ENCODE measurements at regions of chr17 and their contacts with region 1.

Region 1: GRCh38 chr17:83083323-83084201 is 4.2 kb downstream of the METRNL start:
- DNase-seq: peak; percentile 82 to 85
- ATAC-seq: peak; percentile 42 to 63 (median 56)
- H3K4me3 ChIP-seq: no peak overlapping the region
- H3K4me3 Mint-ChIP-seq: peak overlapping the region; percentile 90
- H3K27ac ChIP-seq: peak overlapping the region; percentile 93
- H3K27ac Mint-ChIP-seq: peak overlapping the region; percentile 98
- H3K4me1 ChIP-seq: peaks cover 78% of the 10 kb centered on the region
- H3K4me1 Mint-ChIP-seq: peaks cover 57 to 63% of the 10 kb centered on the region in 2 donors
- H3K27me3 ChIP-seq: peaks cover under 1% of the 10 kb centered on the region
- H3K27me3 Mint-ChIP-seq: no peaks in the 10 kb centered on the region
- CTCF ChIP-seq: no peak

Region 2: GRCh38 chr17:82848022-82848592 is 235.5 kb before region 1 on chr17:
- intact Hi-C with region 1: loop called (anchors 5 kb)
- DNase-seq: peak; percentile 74 to 75
- ATAC-seq: peak; percentile 94 to 98 (median 95)
- H3K4me3 ChIP-seq: peak overlapping the region; percentile 31
- H3K4me3 Mint-ChIP-seq: peak overlapping the region; percentile 83
- H3K27ac ChIP-seq: peak overlapping the region; percentile 75
- H3K27ac Mint-ChIP-seq: peak overlapping the region; percentile 88 to 92
- H3K4me1 ChIP-seq: peaks cover 24% of the 10 kb centered on the region
- H3K4me1 Mint-ChIP-seq: peaks cover 19 to 32% of the 10 kb centered on the region in 2 donors
- H3K27me3 ChIP-seq: no peaks in the 10 kb centered on the region
- H3K27me3 Mint-ChIP-seq: no peaks in the 10 kb centered on the region
- CTCF ChIP-seq: no peak

Region 3: GRCh38 chr17:82892899-82893565 is 190.5 kb before region 1 on chr17:
- intact Hi-C with region 1: loop called (anchors 1 kb)
- DNase-seq: peak; percentile 76 to 91
- ATAC-seq: peak; percentile 92 to 99 (median 93)
- H3K4me3 ChIP-seq: no peak overlapping the region
- H3K4me3 Mint-ChIP-seq: peak overlapping the region; percentile 68
- H3K27ac ChIP-seq: peak overlapping the region; percentile 61
- H3K27ac Mint-ChIP-seq: peak overlapping the region; percentile 82 to 83
- H3K4me1 ChIP-seq: peaks cover 29% of the 10 kb centered on the region
- H3K4me1 Mint-ChIP-seq: peaks cover 31 to 36% of the 10 kb centered on the region in 2 donors
- H3K27me3 ChIP-seq: no peaks in the 10 kb centered on the region
- H3K27me3 Mint-ChIP-seq: peaks cover 0 to 7% of the 10 kb centered on the region in 2 donors
- CTCF ChIP-seq: no peak

Region 4: GRCh38 chr17:82985973-82986372 is 97.6 kb before region 1 on chr17:
- intact Hi-C with region 1: loop called (anchors 1 kb)
- DNase-seq: peak; percentile 62 to 80
- ATAC-seq: peak; percentile 88 to 97 (median 94)
- H3K4me3 ChIP-seq: no peak overlapping the region
- H3K4me3 Mint-ChIP-seq: peak overlapping the region; percentile 86
- H3K27ac ChIP-seq: peak overlapping the region; percentile 2
- H3K27ac Mint-ChIP-seq: peak overlapping the region; percentile 78 to 86
- H3K4me1 ChIP-seq: peaks cover 24% of the 10 kb centered on the region
- H3K4me1 Mint-ChIP-seq: peaks cover 20 to 44% of the 10 kb centered on the region in 2 donors
- H3K27me3 ChIP-seq: no peaks in the 10 kb centered on the region
- H3K27me3 Mint-ChIP-seq: no peaks in the 10 kb centered on the region
- CTCF ChIP-seq: no peak

Region 5: GRCh38 chr17:83024218-83024971 is 59.2 kb before region 1 on chr17:
- intact Hi-C with region 1: no loop called
- DNase-seq: peak in 1 of 2 donors; percentile 15
- ATAC-seq: peak in 2 of 3 donors; percentile 32 to 49
- H3K4me3 ChIP-seq: no peak overlapping the region
- H3K4me3 Mint-ChIP-seq: no peak overlapping the region
- H3K27ac ChIP-seq: no peak overlapping the region
- H3K27ac Mint-ChIP-seq: no peak overlapping the region
- H3K4me1 ChIP-seq: peaks cover 35% of the 10 kb centered on the region
- H3K4me1 Mint-ChIP-seq: peaks cover 16 to 28% of the 10 kb centered on the region in 2 donors
- H3K27me3 ChIP-seq: no peaks in the 10 kb centered on the region
- H3K27me3 Mint-ChIP-seq: no peaks in the 10 kb centered on the region
- CTCF ChIP-seq: no peak

Region 6: GRCh38 chr17:83037084-83037873 is 46.3 kb before region 1 on chr17:
- intact Hi-C with region 1: no loop called
- DNase-seq: no peak
- ATAC-seq: no peak
- H3K4me3 ChIP-seq: no peak overlapping the region
- H3K4me3 Mint-ChIP-seq: no peak overlapping the region
- H3K27ac ChIP-seq: no peak overlapping the region
- H3K27ac Mint-ChIP-seq: no peak overlapping the region
- H3K4me1 ChIP-seq: no peaks in the 10 kb centered on the region
- H3K4me1 Mint-ChIP-seq: no peaks in the 10 kb centered on the region
- H3K27me3 ChIP-seq: no peaks in the 10 kb centered on the region
- H3K27me3 Mint-ChIP-seq: no peaks in the 10 kb centered on the region
- CTCF ChIP-seq: no peak

Region 7: GRCh38 chr17:83051395-83052233 is 31.9 kb before region 1 on chr17:
- intact Hi-C with region 1: loop called (anchors 1 kb)
- DNase-seq: peak; percentile 97 to 99
- ATAC-seq: peak; percentile 79 to 96 (median 80)
- H3K4me3 ChIP-seq: peak overlapping the region; percentile 35
- H3K4me3 Mint-ChIP-seq: peak overlapping the region; percentile 93
- H3K27ac ChIP-seq: peak overlapping the region; percentile 97
- H3K27ac Mint-ChIP-seq: peak overlapping the region; percentile 88 to 92
- H3K4me1 ChIP-seq: peaks cover 57% of the 10 kb centered on the region
- H3K4me1 Mint-ChIP-seq: peaks cover 31 to 50% of the 10 kb centered on the region in 2 donors
- H3K27me3 ChIP-seq: no peaks in the 10 kb centered on the region
- H3K27me3 Mint-ChIP-seq: no peaks in the 10 kb centered on the region
- CTCF ChIP-seq: no peak

Region 8: GRCh38 chr17:83099570-83100231 is 16.1 kb after region 1 on chr17:
- intact Hi-C with region 1: loop called (anchors 2 kb)
- DNase-seq: peak in 1 of 2 donors; percentile 41
- ATAC-seq: peak; percentile 15 to 28 (median 20)
- H3K4me3 ChIP-seq: no peak overlapping the region
- H3K4me3 Mint-ChIP-seq: peak overlapping the region; percentile 75
- H3K27ac ChIP-seq: no peak overlapping the region
- H3K27ac Mint-ChIP-seq: peak overlapping the region; percentile 72 to 78
- H3K4me1 ChIP-seq: peaks cover 48% of the 10 kb centered on the region
- H3K4me1 Mint-ChIP-seq: peaks cover 13 to 47% of the 10 kb centered on the region in 2 donors
- H3K27me3 ChIP-seq: peaks cover 17% of the 10 kb centered on the region
- H3K27me3 Mint-ChIP-seq: no peaks in the 10 kb centered on the region
- CTCF ChIP-seq: no peak

Region 9: DNA sequence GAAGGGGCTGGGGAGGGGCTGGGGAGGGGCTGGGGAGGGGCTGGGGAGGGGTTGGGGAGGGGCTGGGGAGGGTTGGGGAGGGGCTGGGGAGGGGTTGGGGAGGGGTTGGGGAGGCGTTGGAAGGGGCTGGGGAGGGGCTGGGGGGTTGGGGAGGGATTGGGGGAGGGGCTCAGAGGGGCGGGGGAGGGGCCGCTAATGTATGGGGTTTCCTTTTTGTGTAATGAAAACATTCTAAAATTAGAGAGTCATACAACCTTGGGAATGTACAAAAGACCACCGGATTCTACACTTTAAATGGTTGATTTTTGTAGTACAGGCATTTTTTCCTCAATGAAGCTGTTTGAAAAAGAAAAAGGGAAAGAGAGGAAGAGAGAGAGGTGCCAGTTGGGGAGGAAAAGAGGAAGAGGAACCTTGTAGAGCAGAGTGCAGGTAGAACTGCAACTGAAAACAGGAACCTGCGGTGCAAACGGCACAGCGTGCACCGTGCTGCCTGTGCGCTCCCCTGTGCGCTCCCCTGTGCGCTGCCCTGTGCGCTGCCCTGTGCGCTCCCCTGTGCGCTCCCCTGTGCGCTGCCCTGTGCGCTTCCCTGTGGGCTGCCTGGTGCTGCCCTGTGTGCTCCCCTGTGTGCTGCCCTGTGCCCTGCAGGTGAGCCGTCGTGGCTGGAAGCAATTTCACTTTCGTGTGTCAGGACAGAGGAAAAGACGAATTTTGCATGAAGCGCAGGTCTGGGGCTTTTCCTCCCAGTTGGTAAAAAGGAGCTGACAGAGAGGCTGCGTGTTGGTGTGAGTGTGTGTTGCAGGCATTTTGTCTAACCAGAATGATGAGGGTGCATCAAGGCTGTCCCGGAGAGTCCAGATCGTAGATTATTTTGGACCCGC is 36.7 kb after region 1 on chr17:
- intact Hi-C with region 1: no loop called
- DNase-seq: peak in 1 of 2 donors; percentile 54
- ATAC-seq: peak; percentile 57 to 83 (median 59)
- H3K4me3 ChIP-seq: no peak overlapping the region
- H3K4me3 Mint-ChIP-seq: peak overlapping the region; percentile 70
- H3K27ac ChIP-seq: no peak overlapping the region
- H3K27ac Mint-ChIP-seq: peak overlapping the region; percentile 36 to 54
- H3K4me1 ChIP-seq: peaks cover 32% of the 10 kb centered on the region
- H3K4me1 Mint-ChIP-seq: peaks cover 44 to 56% of the 10 kb centered on the region in 2 donors
- H3K27me3 ChIP-seq: peaks cover 18% of the 10 kb centered on the region
- H3K27me3 Mint-ChIP-seq: peaks cover 41 to 47% of the 10 kb centered on the region in 2 donors
- CTCF ChIP-seq: no peak

Region 10: DNA sequence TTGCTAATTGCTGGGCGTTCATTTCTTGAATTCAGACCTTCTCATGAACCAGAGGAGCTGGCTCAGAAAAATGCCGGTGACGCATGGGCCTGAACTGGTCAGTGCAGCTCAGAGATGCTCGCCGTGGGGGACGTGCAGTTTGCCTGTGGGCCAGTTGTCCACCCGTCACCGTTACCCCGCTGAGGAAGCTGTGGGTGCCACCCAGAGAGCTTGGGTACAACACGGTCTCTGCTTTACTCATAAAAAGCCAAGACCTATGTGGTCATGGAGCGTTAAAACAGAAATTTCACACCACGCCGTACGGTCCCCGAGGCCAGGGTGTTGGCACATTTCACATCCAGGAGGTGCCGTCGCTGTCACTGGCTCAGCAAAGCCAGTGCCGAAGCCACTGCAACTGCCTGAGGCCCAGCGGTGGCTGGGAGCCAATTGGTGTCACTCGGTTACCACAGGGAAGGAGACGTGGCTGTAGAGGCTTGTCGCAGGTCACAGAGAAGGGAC is 116.7 kb after region 1 on chr17:
- intact Hi-C with region 1: loop called (anchors 1 kb)
- DNase-seq: peak; percentile 84 to 86
- ATAC-seq: peak; percentile 73 to 87 (median 84)
- H3K4me3 ChIP-seq: peak overlapping the region; percentile 19
- H3K4me3 Mint-ChIP-seq: peak overlapping the region; percentile 94
- H3K27ac ChIP-seq: peak overlapping the region; percentile 85
- H3K27ac Mint-ChIP-seq: peak overlapping the region; percentile 98 to 99
- H3K4me1 ChIP-seq: peaks cover 72% of the 10 kb centered on the region
- H3K4me1 Mint-ChIP-seq: peaks cover 51 to 66% of the 10 kb centered on the region in 2 donors
- H3K27me3 ChIP-seq: no peaks in the 10 kb centered on the region
- H3K27me3 Mint-ChIP-seq: no peaks in the 10 kb centered on the region
- CTCF ChIP-seq: no peak

Measured in natural killer cell (primary cell).